ENCODE measurements at regions of chr18 and their contacts with region 1.

Region 1: DNA sequence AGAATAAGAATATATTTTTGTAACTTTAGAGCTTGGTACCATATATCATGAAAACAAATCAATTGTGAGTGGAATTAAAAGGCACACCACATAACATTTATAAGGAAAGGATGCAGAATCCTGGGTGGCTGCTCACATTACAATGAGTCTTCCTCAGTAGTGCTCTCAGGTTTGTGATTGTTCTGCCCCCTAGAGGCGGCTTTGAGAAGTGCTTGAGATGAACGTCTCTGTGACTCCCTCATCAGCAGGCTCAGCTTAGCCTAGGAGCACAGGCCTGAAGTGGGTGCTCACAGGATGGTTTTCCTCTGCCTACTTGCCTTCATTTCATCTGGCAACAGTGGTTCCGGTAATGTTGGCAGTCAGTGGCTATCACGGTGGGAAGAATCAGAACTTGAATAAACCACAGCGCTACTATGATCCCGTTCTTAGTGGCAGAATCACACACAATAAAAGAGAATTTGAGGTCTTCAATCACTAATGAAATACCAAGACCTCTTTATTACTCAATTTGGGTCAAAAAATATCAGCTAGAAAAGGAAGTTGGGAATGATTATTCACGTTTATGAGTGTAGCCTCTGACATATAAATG is 38.1 kb upstream of the B4GALT6 start:
- DNase-seq: no peak
- H3K4me3 ChIP-seq: no peak overlapping the region
- H3K27ac ChIP-seq: no peak overlapping the region
- H3K4me1 ChIP-seq: peaks cover 0 to 25% (median 2%) of the 10 kb centered on the region in 3 donors
- H3K27me3 ChIP-seq: no peaks in the 10 kb centered on the region
- CTCF ChIP-seq: peak; percentile 61 to 89 (median 80)
- POLR2A ChIP-seq: no peak

Region 2: DNA sequence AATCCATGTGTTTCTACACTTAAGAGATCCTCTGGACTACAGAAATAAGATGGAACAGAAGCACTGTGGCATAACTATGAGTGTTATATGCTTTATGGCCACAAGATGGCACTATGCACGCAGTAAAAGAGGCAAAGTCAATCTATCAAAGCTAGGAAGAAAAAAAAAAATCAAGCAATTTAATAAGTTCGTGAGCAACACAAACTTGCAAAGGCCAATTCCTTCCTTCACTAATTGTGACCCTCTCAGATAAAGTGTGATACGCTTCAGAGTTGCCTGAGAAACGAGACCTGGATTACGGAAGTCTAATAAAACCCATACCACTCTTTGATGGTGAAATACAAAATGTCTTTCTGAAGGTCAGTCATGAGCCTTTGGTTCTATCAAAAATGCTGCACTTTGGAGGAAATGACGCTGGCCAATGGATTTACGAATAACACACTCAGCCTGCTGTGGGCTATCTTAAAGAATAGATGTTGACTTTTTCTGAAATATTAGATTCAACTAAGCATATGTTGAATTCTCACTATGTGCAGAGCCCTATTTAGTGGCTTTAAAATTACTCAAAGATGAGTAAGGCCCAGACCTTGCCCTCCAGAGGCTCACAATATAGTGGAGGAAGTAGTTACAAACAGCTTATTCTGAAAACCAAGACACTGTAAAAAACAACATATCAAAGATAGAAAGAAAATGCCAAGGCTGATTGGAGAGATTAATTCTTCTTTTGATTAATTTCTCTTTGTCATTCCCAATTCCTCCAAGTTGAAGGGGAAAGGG is 166.3 kb before region 1 on chr18:
- intact Hi-C with region 1: loop called (anchors 5 kb)
- DNase-seq: no peak
- H3K4me3 ChIP-seq: no peak overlapping the region
- H3K27ac ChIP-seq: no peak overlapping the region
- H3K4me1 ChIP-seq: no peaks in the 10 kb centered on the region
- H3K27me3 ChIP-seq: peaks cover 0 to 4% (median 0%) of the 10 kb centered on the region in 4 donors
- CTCF ChIP-seq: peak; percentile 59 to 83 (median 75)
- POLR2A ChIP-seq: no peak